Activated CD4-positive, alpha-beta T cell treated with anti-CD3 and anti-CD28 coated beads, Interleukin-2, amount 10 ng/mL, durations not matched to agents 7 days and 5 days (primary cell): ENCODE measurements at regions of chr17 and their contacts with region 1.

Region 1: DNA sequence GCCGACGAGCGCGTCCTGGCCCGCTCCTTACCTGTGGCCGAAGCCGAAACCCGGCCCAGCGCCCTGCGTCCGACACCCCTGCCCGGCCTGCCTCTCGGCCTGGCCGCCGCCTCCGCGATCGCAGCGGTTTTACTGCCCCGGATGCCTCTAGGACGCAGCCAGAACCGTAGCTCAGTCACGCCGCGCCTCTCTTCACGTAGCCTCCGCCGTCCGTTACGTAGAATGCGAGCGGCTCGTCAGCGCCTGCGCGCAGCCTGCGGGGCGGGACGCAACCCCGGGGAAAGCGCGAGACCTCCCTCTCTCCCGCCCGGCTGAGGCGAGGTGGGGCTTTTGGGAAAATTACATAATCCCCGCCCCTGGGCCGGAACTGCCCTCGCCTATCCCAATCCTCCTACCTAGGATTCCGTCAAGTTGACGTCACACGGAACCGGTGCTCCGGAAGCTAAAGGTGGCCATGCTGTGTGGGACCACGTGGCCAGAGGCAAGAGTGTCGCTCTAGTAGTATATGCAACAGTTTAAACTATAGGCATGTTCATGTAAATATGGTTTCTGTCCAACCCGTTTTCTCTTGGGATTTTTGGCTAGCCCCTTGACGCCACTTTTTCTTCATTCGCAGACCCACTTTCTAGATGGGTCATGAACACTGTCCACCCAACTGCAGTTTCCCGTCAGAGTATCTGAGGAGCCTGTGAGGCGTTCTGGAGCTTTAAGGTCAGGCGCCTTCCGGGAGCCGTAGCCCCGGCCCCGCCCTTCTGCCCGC is at the start of gene CCDC47:
- DNase-seq: peak; percentile 99
- H3K4me3 Mint-ChIP-seq: peak within 1 kb of the TSS; percentile 90
- H3K27ac Mint-ChIP-seq: peak within 1 kb of the TSS; percentile 99
- H3K4me1 Mint-ChIP-seq: peaks cover 55% of the 10 kb centered on the region
- H3K27me3 Mint-ChIP-seq: no peaks in the 10 kb centered on the region
- total RNA-seq, gene CCDC47: 59.2 to 65.4 TPM

Region 2: DNA sequence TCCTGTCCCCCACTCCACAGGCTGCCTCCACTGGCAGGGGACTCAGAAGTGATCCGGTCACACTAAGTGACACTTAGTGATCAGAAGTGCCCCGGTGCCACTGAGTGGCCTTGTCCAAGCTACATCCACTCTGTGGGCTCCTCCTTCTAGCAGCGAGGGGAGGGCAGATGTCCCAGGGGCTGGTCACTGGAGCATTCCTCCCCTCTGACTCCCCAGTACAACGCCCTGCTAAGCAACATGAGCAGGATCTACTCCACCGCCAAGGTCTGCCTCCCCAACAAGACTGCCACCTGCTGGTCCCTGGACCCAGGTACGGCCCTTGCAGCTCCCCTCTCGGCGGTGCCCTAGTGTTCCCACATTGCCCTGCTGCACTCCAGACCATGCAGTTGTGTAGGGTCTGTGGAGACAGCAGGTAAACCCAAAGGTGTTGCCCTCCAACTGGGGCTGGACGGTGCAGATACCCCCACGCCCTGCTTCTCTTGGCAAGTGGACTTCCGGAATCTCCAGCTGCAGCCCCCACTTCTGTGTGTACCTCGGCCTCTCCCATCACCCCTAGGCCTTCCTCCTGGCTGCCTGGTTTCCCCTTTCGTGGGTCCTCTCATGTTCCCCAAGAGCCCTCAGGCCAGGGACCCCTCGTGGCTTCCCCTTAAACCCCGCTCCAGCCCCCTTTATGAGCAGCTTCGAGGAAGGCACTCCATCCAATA is 294.6 kb before region 1 on chr17:
- CTCF ChIA-PET with region 1: no interaction called
- POLR2A ChIA-PET with region 1: no interaction called
- DNase-seq: peak; percentile 86
- H3K4me3 Mint-ChIP-seq: no peak overlapping the region
- H3K27ac Mint-ChIP-seq: no peak overlapping the region
- H3K4me1 Mint-ChIP-seq: peaks cover 20% of the 10 kb centered on the region
- H3K27me3 Mint-ChIP-seq: peaks cover 40% of the 10 kb centered on the region

Region 3: GRCh38 chr17:63675607-63676413 is 97.8 kb before region 1 on chr17:
- CTCF ChIA-PET with region 1: no interaction called
- POLR2A ChIA-PET with region 1: no interaction called
- DNase-seq: no peak
- H3K4me3 Mint-ChIP-seq: no peak overlapping the region
- H3K27ac Mint-ChIP-seq: no peak overlapping the region
- H3K4me1 Mint-ChIP-seq: peaks cover 3% of the 10 kb centered on the region
- H3K27me3 Mint-ChIP-seq: no peaks in the 10 kb centered on the region

Region 4: DNA sequence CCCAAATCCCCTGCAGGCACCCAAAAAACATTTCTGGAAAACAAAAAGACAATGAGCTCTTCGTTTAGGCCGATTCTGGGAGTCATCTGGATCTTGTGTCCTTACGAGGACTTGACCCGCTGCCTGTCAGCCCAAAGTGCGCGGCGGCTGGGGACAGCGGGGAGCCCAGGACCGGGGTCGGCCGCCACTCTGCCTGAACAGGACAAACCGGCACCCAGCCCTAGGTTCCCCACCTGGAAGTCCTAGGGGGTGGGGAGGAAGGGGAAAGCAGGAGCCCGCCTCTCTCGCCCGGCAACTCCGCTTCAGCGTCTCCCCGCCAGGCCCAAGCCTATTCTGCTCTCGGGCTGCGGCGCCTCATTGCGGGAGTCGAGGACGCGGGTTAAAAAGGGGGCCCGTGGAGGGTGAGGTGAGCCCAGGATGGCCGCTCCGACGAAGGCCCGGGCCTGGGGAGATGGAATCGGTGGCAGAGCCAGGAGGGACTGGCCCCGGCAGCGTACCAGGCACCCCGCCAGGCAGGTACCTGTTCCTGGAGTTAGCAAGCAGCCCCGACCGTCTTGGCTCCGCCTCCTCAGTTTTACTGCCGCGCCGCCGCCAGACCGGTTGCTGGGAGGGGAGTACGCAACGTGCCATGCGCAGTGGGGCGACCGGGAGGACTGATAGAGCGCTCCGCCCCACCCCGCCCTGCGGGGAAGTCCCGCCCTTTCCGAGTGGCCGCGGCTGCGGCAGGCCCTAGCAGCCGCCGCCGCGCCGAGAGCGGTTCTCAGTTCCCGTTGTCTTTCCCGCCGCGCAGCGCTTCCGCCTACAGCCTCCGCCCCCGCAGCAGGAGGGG is 32.1 kb before region 1 on chr17 and contains the start of gene STRADA:
- CTCF ChIA-PET with region 1: interaction called, 4 read pairs
- POLR2A ChIA-PET with region 1: interaction called, 10 read pairs
- DNase-seq: peak; percentile 99
- H3K4me3 Mint-ChIP-seq: peak within 1 kb of the TSS; percentile 93
- H3K27ac Mint-ChIP-seq: peak within 1 kb of the TSS; percentile 95
- H3K4me1 Mint-ChIP-seq: peaks cover 34% of the 10 kb centered on the region
- H3K27me3 Mint-ChIP-seq: no peaks in the 10 kb centered on the region
- total RNA-seq, gene STRADA: 46.8 to 49.0 TPM

Region 5: GRCh38 chr17:63760771-63761539 is 12.6 kb before region 1 on chr17:
- CTCF ChIA-PET with region 1: interaction called, 10 read pairs
- POLR2A ChIA-PET with region 1: interaction called, 4 read pairs
- DNase-seq: no peak
- H3K4me3 Mint-ChIP-seq: no peak overlapping the region
- H3K27ac Mint-ChIP-seq: peak overlapping the region; percentile 0
- H3K4me1 Mint-ChIP-seq: peaks cover 18% of the 10 kb centered on the region
- H3K27me3 Mint-ChIP-seq: no peaks in the 10 kb centered on the region